ENCODE measurements at regions of chr17 and their contacts with region 1.

Region 1: DNA sequence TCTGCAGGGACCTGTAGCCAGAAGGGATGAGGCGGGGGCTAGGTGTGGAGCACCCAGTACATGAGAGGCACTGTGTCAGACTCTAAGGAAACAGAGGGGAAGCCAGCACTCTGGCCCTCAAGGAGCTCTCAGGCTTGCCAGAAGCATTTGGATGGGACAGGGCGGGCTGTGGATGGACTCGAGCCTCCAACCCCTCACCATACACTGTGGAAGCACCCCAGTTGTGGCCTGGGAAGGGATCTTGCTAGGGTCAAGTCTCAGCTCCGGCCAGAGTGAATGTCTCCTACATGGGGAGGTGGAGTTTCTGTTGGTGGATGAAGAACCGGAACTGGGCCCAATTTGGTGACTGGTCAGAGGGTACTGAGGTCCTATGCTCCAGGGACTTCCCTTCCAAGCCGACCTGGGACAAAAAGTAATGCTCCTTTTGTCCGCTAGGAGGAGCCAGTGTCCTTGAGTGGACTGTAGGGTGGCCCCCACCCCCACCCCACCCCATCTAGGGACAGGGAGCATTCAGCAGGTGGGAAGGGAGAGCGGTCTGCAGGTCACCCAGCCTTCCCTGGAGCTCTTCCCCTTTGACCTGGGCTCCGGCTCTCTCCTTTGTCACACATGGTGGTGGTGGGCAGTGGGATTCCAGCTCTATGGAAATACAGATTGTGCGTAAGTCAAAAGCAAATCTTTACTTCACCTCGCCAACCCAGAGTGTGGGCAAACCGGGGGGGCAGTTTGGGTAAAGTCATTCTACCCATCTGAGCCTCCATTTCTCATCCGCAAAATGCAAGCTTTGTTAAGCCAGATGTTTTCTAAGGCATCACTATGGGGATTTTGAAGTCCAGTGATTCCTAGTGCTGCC is 20.4 kb upstream of the PHB1 start:
- DNase-seq: peak in 4 of 5 donors; percentile 7 to 35 (median 24)
- H3K4me3 ChIP-seq: no peak overlapping the region
- H3K4me3 Mint-ChIP-seq: no peak overlapping the region
- H3K27ac ChIP-seq: no peak overlapping the region
- H3K27ac Mint-ChIP-seq: no peak overlapping the region
- H3K4me1 ChIP-seq: no peaks in the 10 kb centered on the region
- H3K4me1 Mint-ChIP-seq: no peaks in the 10 kb centered on the region
- H3K27me3 ChIP-seq: peaks cover 9% of the 10 kb centered on the region
- H3K27me3 Mint-ChIP-seq: peaks cover 17 to 33% of the 10 kb centered on the region in 2 donors

Region 2: DNA sequence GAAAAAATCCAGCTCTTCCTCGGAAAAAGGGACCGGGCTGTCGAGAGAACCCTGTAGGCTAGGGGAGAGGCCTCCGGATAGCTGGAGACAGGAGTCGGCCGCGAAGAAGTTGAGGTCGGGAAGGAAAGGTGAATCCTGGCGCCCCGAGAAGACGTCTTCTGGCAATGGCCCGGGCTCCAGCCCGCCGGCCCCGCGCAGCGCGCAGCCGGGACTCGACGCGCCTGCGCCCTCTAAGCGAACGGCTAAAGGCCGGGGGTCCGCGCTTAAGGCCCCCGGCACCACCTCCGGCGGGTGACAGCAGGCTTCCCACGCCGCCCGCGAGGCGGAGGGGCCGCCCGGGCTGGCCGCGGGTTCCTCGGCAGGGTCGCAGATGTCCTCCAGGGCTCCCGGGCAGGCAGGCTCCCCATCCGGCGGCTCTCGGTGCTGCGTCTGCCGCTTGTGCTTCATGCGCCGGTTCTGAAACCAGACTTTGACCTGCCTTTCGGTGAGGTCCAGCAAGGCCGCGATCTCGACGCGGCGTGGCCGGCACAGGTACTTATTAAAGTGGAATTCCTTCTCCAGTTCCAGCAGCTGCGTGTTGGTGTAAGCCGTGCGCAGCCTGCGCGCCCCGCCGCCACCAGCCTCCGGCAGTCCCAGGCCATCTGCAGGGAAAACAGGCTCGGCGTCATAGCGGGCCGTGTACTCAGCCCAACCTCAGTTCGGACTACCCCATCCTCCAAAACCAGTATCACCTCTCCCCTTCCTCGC is 891.8 kb before region 1 on chr17:
- CTCF ChIA-PET with region 1: no interaction called
- POLR2A ChIA-PET with region 1: no interaction called
- intact Hi-C with region 1: no loop called
- DNase-seq: peak; percentile 51 to 66 (median 61)
- H3K4me3 ChIP-seq: peak overlapping the region; percentile 74 to 86
- H3K4me3 Mint-ChIP-seq: peak overlapping the region; percentile 94 to 100 (median 99)
- H3K27ac ChIP-seq: peak overlapping the region; percentile 86
- H3K27ac Mint-ChIP-seq: peak overlapping the region; percentile 87 to 99 (median 97)
- H3K4me1 ChIP-seq: peaks cover 28% of the 10 kb centered on the region
- H3K4me1 Mint-ChIP-seq: peaks cover 13 to 75% (median 41%) of the 10 kb centered on the region in 4 donors
- H3K27me3 ChIP-seq: no peaks in the 10 kb centered on the region
- H3K27me3 Mint-ChIP-seq: peaks cover 6 to 7% of the 10 kb centered on the region in 2 donors

Region 3: DNA sequence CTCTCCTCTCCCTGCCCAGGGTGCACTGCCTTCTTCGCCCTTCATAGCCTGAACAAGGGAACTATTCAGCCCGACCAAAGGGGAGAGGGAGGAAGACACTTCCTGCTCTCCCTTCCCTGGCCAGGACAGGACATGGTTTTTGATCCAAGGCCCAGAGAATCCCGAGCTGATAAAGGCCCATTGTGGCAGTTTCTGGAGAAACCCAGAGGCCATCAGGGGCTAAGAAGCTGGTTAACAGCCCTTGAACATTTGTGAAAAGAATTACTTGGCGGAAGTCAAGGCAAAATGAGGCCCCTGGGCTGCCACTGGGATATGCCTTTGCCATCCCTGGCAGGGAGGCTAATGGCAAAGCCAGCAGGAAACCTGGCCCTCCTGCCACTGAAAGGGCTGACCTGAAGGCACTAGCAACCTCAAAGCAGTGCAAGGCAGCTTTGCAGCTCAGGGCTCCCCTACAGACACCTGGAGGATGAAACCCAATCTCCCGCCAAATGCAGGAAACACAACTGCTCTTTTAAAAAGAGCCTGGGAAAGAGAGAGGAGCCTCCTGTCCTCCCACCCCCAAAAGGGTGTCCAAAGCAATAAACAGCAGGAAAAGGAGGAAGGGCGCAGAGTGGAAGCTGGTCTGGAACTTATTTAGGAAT is 33.0 kb before region 1 on chr17:
- CTCF ChIA-PET with region 1: no interaction called
- POLR2A ChIA-PET with region 1: no interaction called
- intact Hi-C with region 1: no loop called
- DNase-seq: no peak
- H3K4me3 ChIP-seq: no peak overlapping the region
- H3K4me3 Mint-ChIP-seq: no peak overlapping the region
- H3K27ac ChIP-seq: no peak overlapping the region
- H3K27ac Mint-ChIP-seq: peak overlapping the region in 3 of 7 donors; percentile 24 to 52 (median 26)
- H3K4me1 ChIP-seq: no peaks in the 10 kb centered on the region
- H3K4me1 Mint-ChIP-seq: peaks cover 0 to 9% (median under 1%) of the 10 kb centered on the region in 4 donors
- H3K27me3 ChIP-seq: no peaks in the 10 kb centered on the region
- H3K27me3 Mint-ChIP-seq: no peaks in the 10 kb centered on the region

Region 4: GRCh38 chr17:49425004-49425286 is 10.1 kb before region 1 on chr17:
- CTCF ChIA-PET with region 1: interaction called, 14 read pairs
- POLR2A ChIA-PET with region 1: no interaction called
- intact Hi-C with region 1: no loop called
- DNase-seq: no peak
- H3K4me3 ChIP-seq: no peak overlapping the region
- H3K4me3 Mint-ChIP-seq: no peak overlapping the region
- H3K27ac ChIP-seq: no peak overlapping the region
- H3K27ac Mint-ChIP-seq: no peak overlapping the region
- H3K4me1 ChIP-seq: no peaks in the 10 kb centered on the region
- H3K4me1 Mint-ChIP-seq: no peaks in the 10 kb centered on the region
- H3K27me3 ChIP-seq: no peaks in the 10 kb centered on the region
- H3K27me3 Mint-ChIP-seq: peaks cover 17 to 29% of the 10 kb centered on the region in 2 donors

Measured in CD4-positive, alpha-beta memory T cell (primary cell).